HEK293 (cell line): ENCODE measurements at regions of chr15 and their contacts with region 1.

Region 1: GRCh38 chr15:39920510-39921273 is 626 bp upstream of the GPR176 start:
- H3K4me3 ChIP-seq: peak overlapping the region; percentile 60
- H3K27ac ChIP-seq: peak overlapping the region; percentile 48
- H3K4me1 ChIP-seq: no peaks in the 10 kb centered on the region
- CTCF ChIP-seq: peak; percentile 60; the same call in 1 of the 2 replicates

Region 2: GRCh38 chr15:39908186-39908585 is 12.5 kb before region 1 on chr15:
- CTCF ChIA-PET with region 1: no interaction called
- POLR2A ChIA-PET with region 1: no interaction called
- H3K4me3 ChIP-seq: no peak overlapping the region
- H3K27ac ChIP-seq: no peak overlapping the region
- H3K4me1 ChIP-seq: no peaks in the 10 kb centered on the region; the same call in 1 of the 2 replicates
- CTCF ChIP-seq: no peak

Region 3: DNA sequence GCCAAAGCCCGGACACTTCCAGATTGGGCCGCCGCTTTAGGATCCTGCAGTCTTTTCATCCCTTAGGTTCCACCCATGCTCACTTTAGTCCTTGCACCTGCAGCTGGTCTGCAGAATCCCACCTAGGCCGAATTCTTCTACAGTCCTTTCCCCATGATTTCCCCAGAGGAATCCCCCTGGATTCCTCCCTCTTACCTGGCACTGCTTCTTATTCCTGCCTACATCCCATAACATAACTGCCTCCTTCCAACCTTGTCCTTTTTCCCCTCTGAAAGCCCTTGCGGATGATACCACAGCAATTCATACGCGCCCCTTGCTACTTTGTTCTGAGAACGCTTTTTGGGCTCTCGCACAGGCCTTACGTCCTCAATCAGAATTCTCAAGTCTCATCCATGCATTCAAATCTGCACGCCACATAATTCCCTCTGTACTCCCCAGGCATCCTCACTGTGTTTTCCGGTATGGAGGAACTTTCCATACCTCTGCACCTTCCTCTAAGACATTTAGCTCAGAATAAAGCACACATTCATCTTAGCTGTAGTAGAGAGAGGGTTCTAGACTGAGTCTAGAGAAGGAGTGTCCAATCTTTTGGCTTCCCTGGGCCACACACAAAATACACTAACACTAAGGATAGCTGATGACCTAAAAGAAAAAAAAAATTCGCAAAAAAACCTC is 13.8 kb after region 1 on chr15:
- CTCF ChIA-PET with region 1: no interaction called
- POLR2A ChIA-PET with region 1: interaction called, 10 read pairs
- H3K4me3 ChIP-seq: peak overlapping the region; percentile 78
- H3K27ac ChIP-seq: peak overlapping the region; percentile 82
- H3K4me1 ChIP-seq: no peaks in the 10 kb centered on the region; the same call in 1 of the 2 replicates
- CTCF ChIP-seq: no peak